WTC11 (cell line): ENCODE measurements at regions of chr6 and their contacts with region 1.

Region 1: DNA sequence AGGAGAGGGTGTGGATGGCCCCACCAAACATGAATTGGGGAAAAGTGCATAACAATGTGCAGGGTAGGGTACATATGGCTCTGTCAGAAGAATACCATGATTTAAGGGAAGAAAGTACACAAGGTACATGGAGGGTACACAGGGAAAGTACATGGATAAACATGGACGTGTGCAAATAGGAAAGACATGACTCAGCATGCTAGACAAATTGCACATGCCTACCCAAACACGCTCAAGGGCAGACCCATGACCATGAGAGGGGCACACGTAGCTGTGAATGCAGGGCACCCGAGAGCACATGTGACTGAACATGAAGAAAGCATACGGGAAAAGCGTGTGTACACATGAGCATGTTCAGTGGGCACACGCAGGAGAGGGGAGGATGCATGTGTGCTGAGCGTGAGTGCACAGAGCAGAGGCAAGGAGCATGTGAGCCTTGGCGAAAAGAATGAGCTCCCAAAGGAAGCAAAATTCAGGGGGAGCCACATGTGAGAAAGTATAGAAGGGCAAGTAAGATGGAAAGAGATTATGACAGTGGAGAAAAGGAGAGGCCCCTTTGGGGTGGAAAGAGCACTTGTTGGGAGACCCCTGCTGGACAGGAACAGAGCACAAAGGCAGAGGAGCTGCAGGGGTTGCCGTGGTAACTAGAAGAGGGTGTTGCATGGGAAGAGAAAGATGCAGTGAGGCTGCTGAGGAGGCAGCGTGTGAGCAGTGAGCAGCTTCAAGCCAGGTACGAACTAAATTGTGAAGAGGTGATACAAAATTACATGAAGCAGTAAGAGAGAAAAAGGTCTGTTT is 17.8 kb downstream of the OR2H2 start:
- DNase-seq: peak; percentile 62
- ATAC-seq: peak; percentile 73
- H3K4me3 Mint-ChIP-seq: no peak overlapping the region
- H3K27ac Mint-ChIP-seq: 0 out of 2 replicates have a peak overlapping the region, but pooled peaks have one; percentile 24
- H3K4me1 Mint-ChIP-seq: peaks cover 22% of the 10 kb centered on the region
- H3K27me3 Mint-ChIP-seq: no peaks in the 10 kb centered on the region
- CTCF ChIP-seq: 0 out of 2 replicates have a peak, but pooled peaks have one; percentile 19

Region 2: DNA sequence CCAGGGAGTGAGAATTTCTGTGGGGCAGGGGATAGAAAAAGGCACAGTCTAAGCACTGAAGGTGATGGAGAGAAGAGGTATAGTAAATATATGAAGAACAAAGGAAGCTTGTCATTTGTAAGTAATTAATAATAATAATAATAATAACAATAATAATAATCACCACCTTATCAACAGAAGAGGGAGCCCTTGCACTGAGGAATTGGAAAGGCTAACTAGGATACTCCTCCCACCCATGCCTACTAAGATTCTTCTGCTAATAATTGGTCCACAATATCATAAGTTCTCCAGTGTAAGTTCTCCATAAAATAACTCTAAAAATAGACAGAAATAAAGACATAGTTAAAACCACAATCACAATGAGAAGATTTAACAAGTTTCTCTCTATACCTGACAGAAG is 226.8 kb before region 1 on chr6:
- CTCF ChIA-PET with region 1: interaction called, 11 read pairs
- POLR2A ChIA-PET with region 1: no interaction called
- DNase-seq: no peak
- ATAC-seq: no peak
- H3K4me3 Mint-ChIP-seq: no peak overlapping the region
- H3K27ac Mint-ChIP-seq: no peak overlapping the region
- H3K4me1 Mint-ChIP-seq: no peaks in the 10 kb centered on the region; the same call in 1 of the 2 replicates
- H3K27me3 Mint-ChIP-seq: no peaks in the 10 kb centered on the region
- CTCF ChIP-seq: no peak

Region 3: DNA sequence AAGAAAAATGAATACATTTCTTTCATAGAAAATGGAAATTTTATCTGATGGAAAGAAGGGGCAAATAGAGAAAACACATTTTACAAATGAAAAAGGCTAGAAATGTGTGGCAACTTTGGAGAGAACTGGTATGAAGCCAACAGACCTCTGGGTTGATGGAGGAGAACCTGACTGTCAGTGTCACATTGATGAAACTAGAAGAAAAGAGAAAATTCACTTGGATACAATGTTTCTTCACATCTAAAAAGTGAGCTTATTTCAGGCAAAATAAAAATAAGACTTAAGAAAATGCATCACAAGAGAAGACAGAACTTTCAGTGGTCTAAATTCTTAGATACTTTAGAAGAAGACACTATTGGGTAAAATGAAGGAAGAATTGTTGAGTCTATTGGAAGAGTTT is 207.4 kb before region 1 on chr6 and contains the start of gene OR12D2:
- CTCF ChIA-PET with region 1: no interaction called
- POLR2A ChIA-PET with region 1: no interaction called
- DNase-seq: no peak
- ATAC-seq: no peak
- H3K4me3 Mint-ChIP-seq: no peak within 1 kb of the TSS
- H3K27ac Mint-ChIP-seq: no peak within 1 kb of the TSS
- H3K4me1 Mint-ChIP-seq: peaks cover 11% of the 10 kb centered on the region
- H3K27me3 Mint-ChIP-seq: no peaks in the 10 kb centered on the region; the same call in 1 of the 2 replicates
- CTCF ChIP-seq: no peak
- total RNA-seq, gene OR12D2: not detected in 3 replicates

Region 4: GRCh38 chr6:29466241-29466640 is 136.5 kb before region 1 on chr6:
- CTCF ChIA-PET with region 1: no interaction called
- POLR2A ChIA-PET with region 1: no interaction called
- DNase-seq: no peak
- ATAC-seq: no peak
- H3K4me3 Mint-ChIP-seq: no peak overlapping the region
- H3K27ac Mint-ChIP-seq: no peak overlapping the region
- H3K4me1 Mint-ChIP-seq: peaks cover 4% of the 10 kb centered on the region
- H3K27me3 Mint-ChIP-seq: peaks cover 6% of the 10 kb centered on the region
- CTCF ChIP-seq: no peak

Region 5: GRCh38 chr6:29617782-29618557 is 15.2 kb after region 1 on chr6:
- CTCF ChIA-PET with region 1: interaction called, 12 read pairs
- POLR2A ChIA-PET with region 1: no interaction called
- DNase-seq: peak; percentile 65
- ATAC-seq: peak; percentile 96
- H3K4me3 Mint-ChIP-seq: no peak overlapping the region
- H3K27ac Mint-ChIP-seq: no peak overlapping the region; the same call in 1 of the 2 replicates
- H3K4me1 Mint-ChIP-seq: peaks cover 22% of the 10 kb centered on the region
- H3K27me3 Mint-ChIP-seq: no peaks in the 10 kb centered on the region
- CTCF ChIP-seq: peak; percentile 23; the same call in 1 of the 2 replicates

Region 6: GRCh38 chr6:29627755-29628418 is 25.1 kb after region 1 on chr6:
- CTCF ChIA-PET with region 1: interaction called, 12 read pairs
- POLR2A ChIA-PET with region 1: interaction called, 3 read pairs
- DNase-seq: peak; percentile 85
- ATAC-seq: peak; percentile 10
- H3K4me3 Mint-ChIP-seq: peak overlapping the region; percentile 87
- H3K27ac Mint-ChIP-seq: peak overlapping the region; percentile 93
- H3K4me1 Mint-ChIP-seq: peaks cover 76% of the 10 kb centered on the region
- H3K27me3 Mint-ChIP-seq: no peaks in the 10 kb centered on the region
- CTCF ChIP-seq: no peak

Region 7: DNA sequence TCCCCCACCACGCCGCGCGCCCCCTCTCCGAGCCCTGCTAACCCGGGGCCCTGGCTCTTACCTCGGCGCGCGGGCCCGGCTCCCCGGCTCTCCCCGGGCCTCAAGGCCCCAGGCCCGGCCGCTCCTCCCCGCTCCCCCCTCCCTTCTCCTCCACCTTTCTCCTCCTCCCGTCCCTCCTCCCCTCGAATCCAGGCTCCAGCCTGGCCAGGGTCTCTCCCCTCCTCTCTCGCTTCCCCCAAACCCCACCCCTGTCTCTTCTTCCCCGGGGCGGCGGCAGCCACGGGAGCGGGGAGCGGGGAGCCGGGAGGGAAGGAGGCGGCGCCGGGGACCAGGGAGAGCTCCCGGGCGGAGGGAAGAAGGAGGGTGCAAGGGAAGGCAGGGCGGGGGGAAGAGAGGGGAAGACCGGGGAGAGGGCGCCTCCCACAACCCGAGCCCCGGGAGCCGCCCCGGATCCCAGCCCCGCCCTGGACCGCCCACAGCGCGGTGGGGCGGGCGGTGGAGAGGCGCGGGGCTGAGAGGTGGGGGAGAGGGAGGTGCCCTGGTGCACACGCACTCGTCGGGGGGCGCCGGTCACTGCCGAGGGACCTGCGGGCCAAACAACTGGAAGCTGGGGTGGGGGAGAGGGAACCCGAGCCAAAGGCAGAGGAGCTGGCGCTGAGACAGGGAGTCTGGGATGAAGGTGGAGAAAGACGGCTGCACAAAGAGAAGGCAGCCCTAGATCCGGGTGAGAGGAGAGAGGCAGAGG is 30.2 kb after region 1 on chr6 and contains the start of gene GABBR1:
- CTCF ChIA-PET with region 1: interaction called, 10 read pairs
- POLR2A ChIA-PET with region 1: no interaction called
- DNase-seq: peak; percentile 90
- ATAC-seq: peak; percentile 51
- H3K4me3 Mint-ChIP-seq: peak within 1 kb of the TSS; percentile 87
- H3K27ac Mint-ChIP-seq: peak within 1 kb of the TSS; percentile 79
- H3K4me1 Mint-ChIP-seq: peaks cover 63% of the 10 kb centered on the region
- H3K27me3 Mint-ChIP-seq: no peaks in the 10 kb centered on the region
- CTCF ChIP-seq: no peak
- total RNA-seq, gene GABBR1: 82.5 to 107 TPM (median 83.0 TPM) in 3 replicates